ENCODE measurements at regions of chr3 and their contacts with region 1.

Region 1: GRCh38 chr3:108040481-108040880 is 50.4 kb downstream of the CD47 start:
- DNase-seq: no peak

Region 2: GRCh38 chr3:108008931-108009639 is 31.4 kb before region 1 on chr3:
- intact Hi-C with region 1: no loop called
- DNase-seq: no peak

Region 3: DNA sequence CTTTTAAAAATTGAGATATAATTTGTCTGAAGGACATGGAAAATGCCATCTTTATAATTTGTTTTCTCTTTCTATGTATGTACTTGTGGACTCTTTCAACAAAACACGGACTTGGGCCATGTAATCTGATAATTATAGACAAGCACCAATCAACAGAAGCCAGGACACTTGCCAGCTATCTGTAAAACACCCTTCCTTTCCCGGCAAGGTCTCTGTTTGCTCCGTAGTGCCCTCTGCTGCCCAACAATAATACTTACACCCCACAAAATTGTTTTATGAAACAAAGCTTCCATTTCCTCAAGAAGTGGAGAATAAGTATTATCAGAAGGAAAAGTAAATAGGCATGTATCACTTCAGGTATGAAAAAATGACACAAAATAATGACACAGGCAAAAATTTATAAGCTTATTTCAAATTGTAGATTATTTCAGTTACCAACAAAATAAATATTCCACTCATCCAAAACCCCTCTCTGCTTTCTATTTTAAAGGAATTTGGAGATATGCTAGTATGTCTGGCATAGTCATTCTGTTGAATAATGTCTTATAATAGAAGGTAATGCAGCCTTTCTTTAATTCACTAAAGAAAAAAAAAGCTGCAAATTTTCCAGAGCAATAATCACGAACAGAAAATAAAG is 437.1 kb after region 1 on chr3:
- intact Hi-C with region 1: loop called (anchors 10 kb)
- DNase-seq: peak in 7 of 10 donors; percentile 23 to 84 (median 52)

Measured in posterior cingulate gyrus (tissue), 11 donors.